ENCODE measurements at regions of chr1 and their contacts with region 1.

Region 1: DNA sequence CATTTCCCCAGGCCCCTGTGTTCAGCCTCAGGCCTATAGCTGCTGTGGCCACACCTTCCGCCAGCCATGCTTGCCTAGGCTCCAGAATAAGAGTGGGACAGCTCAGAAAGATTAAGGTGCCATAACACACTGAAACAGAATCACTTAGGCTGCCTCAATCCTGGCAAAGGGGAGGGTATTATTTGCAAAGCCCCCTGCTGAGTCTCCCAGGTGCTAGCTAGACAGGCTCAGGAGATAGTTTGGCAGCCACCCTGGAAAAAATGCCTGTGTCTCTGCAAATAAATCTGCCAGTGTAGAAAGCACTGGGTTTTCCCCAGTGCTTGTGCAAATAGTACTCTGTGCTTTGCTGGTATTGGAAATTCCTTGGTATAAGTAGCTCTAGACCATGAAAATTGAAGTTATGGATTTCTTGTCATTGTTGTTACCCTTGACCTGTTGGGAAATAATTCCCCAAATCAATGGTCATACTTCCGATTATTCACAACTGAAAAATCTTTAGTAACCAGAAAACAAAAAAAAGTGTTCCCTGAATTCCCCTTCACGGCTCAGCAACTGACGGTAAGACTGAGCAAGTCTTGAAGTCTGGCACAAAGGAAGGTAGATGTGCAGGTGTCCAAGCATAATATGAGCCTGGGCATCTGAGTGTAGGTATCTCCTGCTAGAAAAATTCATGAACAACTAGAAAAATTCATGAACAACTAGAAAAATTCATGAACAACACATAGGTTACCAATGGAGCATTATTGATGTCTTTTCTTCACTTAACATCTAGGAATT is 56.9 kb downstream of the PROX1 start:
- DNase-seq: no peak
- H3K4me3 ChIP-seq: no peak overlapping the region
- H3K27ac ChIP-seq: no peak overlapping the region
- H3K4me1 ChIP-seq: no peaks in the 10 kb centered on the region
- H3K27me3 ChIP-seq: no peaks in the 10 kb centered on the region
- CTCF ChIP-seq: no peak

Region 2: DNA sequence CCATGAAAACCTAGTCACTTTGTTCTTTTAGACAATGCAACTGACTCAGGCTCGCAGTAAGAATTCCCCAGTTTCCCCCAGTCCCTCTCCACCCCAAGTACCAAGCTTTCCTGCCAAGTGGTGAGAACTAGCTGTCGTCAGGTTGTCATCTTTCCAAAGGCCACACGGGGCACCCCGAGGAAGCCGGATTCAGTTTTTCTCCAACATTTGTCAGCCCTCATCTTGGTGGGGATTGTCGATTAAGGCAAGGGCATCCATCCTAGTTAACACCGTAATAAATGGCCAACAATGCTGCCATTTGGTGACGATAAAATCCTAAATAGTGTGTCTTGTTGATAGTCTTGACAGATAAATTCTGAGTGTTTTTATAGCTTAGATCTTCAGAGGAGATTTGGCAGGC is 112.8 kb before region 1 on chr1:
- intact Hi-C with region 1: no loop called
- DNase-seq: no peak
- H3K4me3 ChIP-seq: no peak overlapping the region
- H3K27ac ChIP-seq: no peak overlapping the region
- H3K4me1 ChIP-seq: no peaks in the 10 kb centered on the region
- H3K27me3 ChIP-seq: peaks cover 0 to 4% of the 10 kb centered on the region in 2 donors
- CTCF ChIP-seq: no peak

Region 3: DNA sequence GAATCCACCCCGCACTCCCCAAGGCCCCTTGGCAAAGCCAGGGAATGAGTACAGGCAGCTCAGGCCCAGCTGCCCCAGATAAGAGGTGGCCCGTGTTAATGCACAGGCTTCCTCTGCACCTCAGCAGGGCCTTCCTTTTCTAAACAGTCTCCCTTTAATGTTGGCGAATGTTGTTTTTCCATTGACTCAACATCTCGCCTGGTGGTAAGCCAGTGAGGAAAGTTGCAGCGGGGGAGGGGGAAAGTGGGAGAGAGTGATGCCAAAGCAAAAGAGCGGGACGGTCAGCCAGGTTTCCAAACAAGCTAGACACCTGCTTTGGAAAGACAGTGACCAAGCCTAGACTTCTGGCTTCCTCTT is 67.2 kb before region 1 on chr1:
- intact Hi-C with region 1: loop called (anchors 2 kb)
- DNase-seq: no peak
- H3K4me3 ChIP-seq: no peak overlapping the region
- H3K27ac ChIP-seq: no peak overlapping the region
- H3K4me1 ChIP-seq: peaks cover 0 to 2% (median under 1%) of the 10 kb centered on the region in 4 donors
- H3K27me3 ChIP-seq: peaks cover 0 to 45% of the 10 kb centered on the region in 2 donors
- CTCF ChIP-seq: no peak

Region 4: GRCh38 chr1:213987927-213988506 is 56.6 kb before region 1 on chr1 and contains the start of gene PROX1:
- intact Hi-C with region 1: no loop called
- DNase-seq: peak in 1 of 2 donors; percentile 87
- H3K4me3 ChIP-seq: peak within 1 kb of the TSS; percentile 56 to 77
- H3K27ac ChIP-seq: peak within 1 kb of the TSS; percentile 65 to 76
- H3K4me1 ChIP-seq: peaks cover 0 to 51% (median 35%) of the 10 kb centered on the region in 4 donors
- H3K27me3 ChIP-seq: peaks cover 5 to 49% of the 10 kb centered on the region in 2 donors
- CTCF ChIP-seq: no peak

Region 5: DNA sequence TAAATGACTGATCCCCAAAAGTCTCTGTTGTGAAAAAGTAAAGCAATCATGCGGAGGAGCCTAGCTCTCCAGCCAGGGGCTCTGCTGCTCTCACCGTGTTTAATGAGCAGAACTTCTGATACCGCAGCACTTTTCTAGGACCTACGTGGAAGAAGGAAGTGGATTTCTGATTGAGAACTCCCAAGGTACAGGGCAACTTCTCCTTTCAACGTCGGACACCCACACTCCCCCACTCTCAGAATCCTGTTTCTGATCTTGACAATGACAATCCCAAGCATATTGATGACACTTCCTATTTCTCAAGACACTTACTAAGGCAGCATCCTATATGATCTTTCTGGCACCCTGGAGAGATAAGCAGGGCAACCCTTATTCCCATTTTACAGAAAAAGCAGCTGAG is 21.6 kb after region 1 on chr1:
- intact Hi-C with region 1: no loop called
- DNase-seq: no peak
- H3K4me3 ChIP-seq: no peak overlapping the region
- H3K27ac ChIP-seq: no peak overlapping the region
- H3K4me1 ChIP-seq: no peaks in the 10 kb centered on the region
- H3K27me3 ChIP-seq: no peaks in the 10 kb centered on the region
- CTCF ChIP-seq: no peak

Measured in tibial artery (tissue), 4 donors.